HepG2 (cell line): ENCODE measurements at regions of chr5 and their contacts with region 1.

Region 1: GRCh38 chr5:173972925-173973615 is 15.9 kb upstream of the C5orf47 start:
- DNase-seq: peak; percentile 73
- ATAC-seq: peak; percentile 59
- H3K4me3 ChIP-seq: peak overlapping the region; percentile 65 to 74 (median 65)
- H3K27ac ChIP-seq: no peak overlapping the region
- H3K4me1 ChIP-seq: peaks cover 72% of the 10 kb centered on the region
- H3K27me3 ChIP-seq: no peaks in the 10 kb centered on the region
- CTCF ChIP-seq: peak; percentile 90
- EP300 ChIP-seq: no peak
- POLR2A ChIP-seq: no peak
- RAD21 ChIP-seq: peak; percentile 92

Region 2: DNA sequence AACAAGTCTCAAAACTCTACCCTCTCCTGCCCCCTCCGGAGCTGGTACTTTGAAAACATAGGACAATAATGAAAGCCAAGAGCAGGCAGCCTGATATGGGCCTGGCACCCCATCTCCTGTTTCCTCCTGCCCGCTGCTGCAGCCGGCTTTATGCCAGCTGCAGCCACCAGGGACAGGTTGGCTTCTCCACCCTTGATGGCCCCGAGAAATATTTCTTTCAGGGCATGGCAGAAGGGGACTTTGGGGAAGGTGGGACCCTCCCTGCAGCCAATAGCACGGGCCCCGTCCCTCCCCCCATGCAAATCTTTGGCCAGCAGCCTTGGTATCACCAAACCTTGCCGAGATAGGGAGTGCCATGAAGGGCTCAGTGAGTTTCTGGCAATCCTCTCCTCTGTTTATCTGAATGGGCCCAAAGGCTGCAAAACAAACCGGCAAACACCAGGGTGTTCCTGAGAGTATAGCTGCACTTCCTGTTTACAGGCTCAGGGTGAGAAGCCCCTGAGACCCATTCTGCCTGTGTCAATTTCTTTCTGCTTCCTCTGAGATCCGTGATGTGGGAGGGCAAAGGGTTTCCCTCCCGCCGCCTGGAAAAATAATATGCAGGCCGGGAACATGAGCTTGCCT is 283.2 kb before region 1 on chr5:
- CTCF ChIA-PET with region 1: no interaction called
- POLR2A ChIA-PET with region 1: no interaction called
- in situ Hi-C with region 1: no loop called
- intact Hi-C with region 1: loop called (anchors 1 kb)
- DNase-seq: peak; percentile 23
- ATAC-seq: peak; percentile 66
- H3K4me3 ChIP-seq: peak overlapping the region; percentile 59 to 74 (median 72)
- H3K27ac ChIP-seq: peak overlapping the region; percentile 68
- H3K4me1 ChIP-seq: peaks cover 68% of the 10 kb centered on the region
- H3K27me3 ChIP-seq: no peaks in the 10 kb centered on the region; a peak in 1 of 5 replicates
- CTCF ChIP-seq: no peak
- EP300 ChIP-seq: no peak
- POLR2A ChIP-seq: no peak; a peak in 1 of 4 replicates
- RAD21 ChIP-seq: no peak

Region 3: DNA sequence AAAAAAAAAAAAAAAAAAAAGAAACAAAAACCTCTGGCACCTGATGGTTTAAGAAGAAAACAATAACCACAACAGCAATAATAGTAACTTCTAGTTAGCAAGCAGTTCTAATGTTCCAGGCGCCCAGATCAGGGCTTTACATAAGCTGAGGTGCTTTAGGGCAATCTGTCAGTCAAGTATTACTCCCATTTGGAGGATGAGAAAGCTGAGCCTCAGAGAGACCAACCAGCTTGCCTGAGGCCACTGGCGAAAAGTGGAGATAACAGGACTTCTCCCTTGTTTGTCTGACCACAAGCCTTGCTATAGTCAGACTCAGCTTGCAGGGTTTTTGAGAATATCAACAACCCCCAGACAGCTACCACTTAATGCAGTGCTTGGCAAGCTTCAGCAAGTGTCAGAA is 273.1 kb before region 1 on chr5:
- CTCF ChIA-PET with region 1: no interaction called
- POLR2A ChIA-PET with region 1: no interaction called
- in situ Hi-C with region 1: no loop called
- intact Hi-C with region 1: no loop called
- DNase-seq: no peak
- ATAC-seq: no peak
- H3K4me3 ChIP-seq: no peak overlapping the region
- H3K27ac ChIP-seq: no peak overlapping the region
- H3K4me1 ChIP-seq: peaks cover 41% of the 10 kb centered on the region
- H3K27me3 ChIP-seq: no peaks in the 10 kb centered on the region
- CTCF ChIP-seq: no peak
- EP300 ChIP-seq: no peak
- POLR2A ChIP-seq: no peak
- RAD21 ChIP-seq: no peak

Region 4: DNA sequence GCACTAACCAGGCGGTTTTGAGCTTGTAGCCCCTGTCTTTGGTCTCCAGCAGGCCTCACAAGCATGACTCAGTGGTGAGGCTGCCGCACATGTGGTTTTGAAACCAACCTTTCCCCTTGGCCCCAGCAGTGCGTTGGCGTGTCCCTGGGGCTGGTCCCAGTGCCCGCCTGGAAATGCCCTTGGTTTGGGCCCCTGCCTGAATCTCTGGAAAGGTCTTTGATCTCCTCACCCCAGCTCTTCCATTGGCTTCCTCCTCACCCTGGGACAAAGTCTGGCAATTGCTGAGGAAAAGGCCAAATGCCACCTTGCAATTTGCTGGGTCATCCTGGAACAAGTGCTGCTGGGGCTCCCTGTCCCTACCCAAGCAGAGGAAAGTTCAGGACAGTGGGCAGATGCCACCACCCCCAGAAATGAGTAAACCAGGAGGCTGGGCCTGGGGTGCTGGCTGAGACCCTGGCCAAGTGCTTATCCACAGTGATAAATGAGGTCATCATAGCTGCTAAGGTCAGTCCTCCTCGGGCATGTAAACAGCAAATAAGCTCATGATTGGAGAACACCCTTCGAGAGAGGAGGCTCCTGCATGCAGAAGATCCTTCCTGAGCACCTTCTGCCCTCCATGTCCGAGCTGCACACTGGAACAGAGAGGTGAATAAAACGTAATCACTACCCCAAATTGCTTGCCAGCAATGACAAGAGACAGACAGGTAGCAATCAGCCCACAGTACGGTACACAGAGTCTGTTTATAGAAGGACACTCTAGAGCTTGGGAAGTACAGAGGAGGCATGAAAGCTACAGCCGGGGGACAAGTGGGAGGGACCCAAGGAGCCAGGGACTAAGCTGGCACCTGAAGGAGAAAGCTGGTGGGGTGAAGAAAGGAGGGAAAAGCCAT is 183.8 kb before region 1 on chr5:
- CTCF ChIA-PET with region 1: no interaction called
- POLR2A ChIA-PET with region 1: interaction called, 10 read pairs
- in situ Hi-C with region 1: no loop called
- intact Hi-C with region 1: no loop called
- DNase-seq: peak; percentile 79
- ATAC-seq: peak; percentile 86
- H3K4me3 ChIP-seq: peak overlapping the region in 2 of 3 experiments; percentile 8 to 48; a peak in 2 of 6 replicates
- H3K27ac ChIP-seq: peak overlapping the region; percentile 73
- H3K4me1 ChIP-seq: peaks cover 68% of the 10 kb centered on the region
- H3K27me3 ChIP-seq: no peaks in the 10 kb centered on the region
- CTCF ChIP-seq: no peak
- EP300 ChIP-seq: peak in 1 of 2 experiments; percentile 82; a peak in 2 of 4 replicates
- POLR2A ChIP-seq: no peak
- RAD21 ChIP-seq: no peak; the same call in 1 of the 2 replicates

Region 5: GRCh38 chr5:173823711-173824528 is 149.2 kb before region 1 on chr5:
- CTCF ChIA-PET with region 1: no interaction called
- POLR2A ChIA-PET with region 1: interaction called, 44 read pairs
- in situ Hi-C with region 1: no loop called
- intact Hi-C with region 1: no loop called
- DNase-seq: peak; percentile 98
- ATAC-seq: peak; percentile 86
- H3K4me3 ChIP-seq: peak overlapping the region in 2 of 3 experiments; percentile 38 to 49; a peak in 5 of 6 replicates
- H3K27ac ChIP-seq: peak overlapping the region; percentile 69
- H3K4me1 ChIP-seq: peaks cover 73% of the 10 kb centered on the region
- H3K27me3 ChIP-seq: no peaks in the 10 kb centered on the region
- CTCF ChIP-seq: no peak
- EP300 ChIP-seq: peak in 1 of 2 experiments; percentile 97; a peak in 2 of 4 replicates
- POLR2A ChIP-seq: peak; percentile 25 to 51; a peak in 2 of 4 replicates
- RAD21 ChIP-seq: no peak

Region 6: DNA sequence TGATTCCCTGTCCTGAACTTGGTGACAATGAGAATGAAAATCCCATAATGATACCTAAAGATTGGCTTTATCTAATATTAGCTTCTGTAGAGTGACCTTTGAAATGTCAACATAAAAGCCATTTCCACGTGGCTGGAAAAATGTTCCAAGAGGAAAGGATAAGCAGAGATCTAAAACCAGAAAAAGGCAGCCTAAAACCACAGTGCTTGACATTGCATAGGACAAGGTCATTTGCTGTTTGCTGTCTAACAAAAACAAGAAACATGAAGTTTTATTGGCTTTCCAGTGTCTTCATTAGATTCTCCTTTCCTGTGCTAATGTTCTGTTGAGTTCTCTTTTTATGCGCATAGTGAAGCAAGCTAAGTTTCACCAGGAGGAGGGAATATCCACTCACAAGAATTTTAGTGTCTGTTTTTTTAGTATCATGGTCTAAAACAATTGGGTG is 40.4 kb before region 1 on chr5:
- CTCF ChIA-PET with region 1: no interaction called
- POLR2A ChIA-PET with region 1: interaction called, 30 read pairs
- in situ Hi-C with region 1: loop called (anchors 5 kb)
- intact Hi-C with region 1: loop called (anchors 5 kb)
- DNase-seq: peak; percentile 96
- ATAC-seq: peak; percentile 94
- H3K4me3 ChIP-seq: peak overlapping the region in 1 of 3 experiments; percentile 11; a peak in 1 of 6 replicates
- H3K27ac ChIP-seq: peak overlapping the region; percentile 79
- H3K4me1 ChIP-seq: peaks cover 87% of the 10 kb centered on the region
- H3K27me3 ChIP-seq: no peaks in the 10 kb centered on the region
- CTCF ChIP-seq: no peak
- EP300 ChIP-seq: peak in 1 of 2 experiments; percentile 96; a peak in 3 of 4 replicates
- POLR2A ChIP-seq: no peak
- RAD21 ChIP-seq: no peak

Region 7: GRCh38 chr5:173954671-173955521 is 18.2 kb before region 1 on chr5:
- CTCF ChIA-PET with region 1: no interaction called
- POLR2A ChIA-PET with region 1: interaction called, 15 read pairs
- in situ Hi-C with region 1: no loop called
- intact Hi-C with region 1: loop called (anchors 1 kb)
- DNase-seq: no peak
- ATAC-seq: no peak
- H3K4me3 ChIP-seq: no peak overlapping the region
- H3K27ac ChIP-seq: peak overlapping the region; percentile 79
- H3K4me1 ChIP-seq: peaks cover 73% of the 10 kb centered on the region
- H3K27me3 ChIP-seq: no peaks in the 10 kb centered on the region
- CTCF ChIP-seq: no peak
- EP300 ChIP-seq: no peak
- POLR2A ChIP-seq: no peak
- RAD21 ChIP-seq: no peak